SK-N-SH (cell line): ENCODE measurements at regions of chr7 and their contacts with region 1.

Region 1: DNA sequence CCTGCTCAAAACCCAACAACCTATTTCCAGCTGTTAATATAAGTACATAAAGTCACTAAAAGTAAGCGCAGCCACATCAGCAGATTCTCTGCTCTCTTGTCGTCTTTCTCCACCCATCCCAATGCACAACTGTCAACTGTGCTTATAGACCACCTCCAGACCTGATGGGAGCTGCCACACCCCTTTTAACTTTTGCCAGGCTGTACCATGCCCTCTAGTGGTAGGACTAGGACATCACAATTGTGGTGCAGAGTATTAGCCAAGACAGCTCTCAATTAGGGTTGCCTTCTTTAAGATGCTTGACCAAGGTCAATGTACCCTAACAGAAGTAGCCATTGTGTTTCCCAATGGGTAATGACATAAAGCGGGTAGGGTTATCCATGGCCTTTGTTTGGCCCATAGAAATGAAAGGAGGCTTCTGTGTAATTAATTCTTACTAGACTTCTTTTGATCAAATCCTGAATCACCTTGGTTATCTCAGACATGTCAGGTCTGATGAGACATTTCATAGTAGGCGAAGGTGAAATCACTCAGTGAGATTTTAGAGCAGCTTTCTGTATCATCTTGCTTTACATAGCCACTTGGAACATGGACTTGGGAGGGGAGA is 68.1 kb downstream of the SCRN1 start:
- DNase-seq: peak; percentile 81
- H3K4me3 ChIP-seq: no peak overlapping the region; a peak in 1 of 4 replicates
- H3K27ac ChIP-seq: no peak overlapping the region
- H3K4me1 ChIP-seq: no peaks in the 10 kb centered on the region; a peak in 1 of 4 replicates
- H3K27me3 ChIP-seq: no peaks in the 10 kb centered on the region
- CTCF ChIP-seq: peak; percentile 99
- EP300 ChIP-seq: no peak
- RAD21 ChIP-seq: peak; percentile 99

Region 2: DNA sequence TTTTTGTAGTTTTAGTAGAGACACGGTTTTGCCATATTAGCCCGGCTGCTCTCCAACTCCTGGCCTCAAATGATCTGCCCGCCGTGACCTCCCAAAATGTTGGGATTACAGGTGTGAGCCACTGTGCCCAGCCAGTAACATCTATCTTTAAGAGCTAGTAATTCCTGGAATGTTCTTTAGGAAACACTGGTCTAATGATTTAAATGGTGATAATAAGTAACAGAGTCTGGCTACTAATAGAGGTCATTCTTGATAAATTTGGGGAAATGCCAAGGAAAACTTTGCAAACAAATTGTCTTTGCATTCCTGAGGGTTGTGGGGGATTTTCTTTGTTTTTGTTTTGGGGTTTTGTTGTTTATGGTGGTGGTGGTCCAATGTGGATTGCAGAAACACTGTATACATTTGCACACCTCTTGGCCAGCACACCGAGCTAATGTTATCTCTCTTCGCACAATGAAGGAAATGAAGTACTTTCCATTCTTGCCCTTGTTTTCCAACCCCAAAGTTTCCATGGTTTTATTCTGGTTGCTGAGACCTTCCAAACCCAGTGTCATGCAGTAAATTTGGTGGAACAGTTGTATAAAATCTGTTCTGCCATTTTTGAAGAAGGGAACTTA is 166.5 kb before region 1 on chr7:
- CTCF ChIA-PET with region 1: interaction called, 47 read pairs
- POLR2A ChIA-PET with region 1: interaction called, 3 read pairs
- DNase-seq: no peak
- H3K4me3 ChIP-seq: no peak overlapping the region
- H3K27ac ChIP-seq: no peak overlapping the region
- H3K4me1 ChIP-seq: no peaks in the 10 kb centered on the region
- H3K27me3 ChIP-seq: no peaks in the 10 kb centered on the region
- CTCF ChIP-seq: no peak
- EP300 ChIP-seq: no peak
- RAD21 ChIP-seq: no peak

Region 3: GRCh38 chr7:29894256-29894655 is 27.3 kb before region 1 on chr7:
- CTCF ChIA-PET with region 1: interaction called, 35 read pairs
- POLR2A ChIA-PET with region 1: no interaction called
- DNase-seq: peak; percentile 74
- H3K4me3 ChIP-seq: no peak overlapping the region
- H3K27ac ChIP-seq: peak overlapping the region in 1 of 2 experiments; percentile 44; a peak in 2 of 4 replicates
- H3K4me1 ChIP-seq: peaks cover 0 to 29% of the 10 kb centered on the region in 2 experiments; a peak in 2 of 4 replicates
- H3K27me3 ChIP-seq: no peaks in the 10 kb centered on the region; the same call in 1 of the 2 replicates
- CTCF ChIP-seq: no peak
- EP300 ChIP-seq: peak in 1 of 2 experiments; percentile 79; a peak in 2 of 4 replicates
- RAD21 ChIP-seq: peak; percentile 13; the same call in 1 of the 2 replicates

Region 4: GRCh38 chr7:29940199-29940598 is 18.7 kb after region 1 on chr7:
- CTCF ChIA-PET with region 1: interaction called, 72 read pairs
- POLR2A ChIA-PET with region 1: no interaction called
- DNase-seq: no peak
- H3K4me3 ChIP-seq: no peak overlapping the region
- H3K27ac ChIP-seq: no peak overlapping the region
- H3K4me1 ChIP-seq: 0 out of 4 replicates have a peak, but pooled peaks cover 0 to 9% of the 10 kb centered on the region in 2 experiments
- H3K27me3 ChIP-seq: no peaks in the 10 kb centered on the region
- CTCF ChIP-seq: no peak
- EP300 ChIP-seq: no peak
- RAD21 ChIP-seq: no peak

Region 5: DNA sequence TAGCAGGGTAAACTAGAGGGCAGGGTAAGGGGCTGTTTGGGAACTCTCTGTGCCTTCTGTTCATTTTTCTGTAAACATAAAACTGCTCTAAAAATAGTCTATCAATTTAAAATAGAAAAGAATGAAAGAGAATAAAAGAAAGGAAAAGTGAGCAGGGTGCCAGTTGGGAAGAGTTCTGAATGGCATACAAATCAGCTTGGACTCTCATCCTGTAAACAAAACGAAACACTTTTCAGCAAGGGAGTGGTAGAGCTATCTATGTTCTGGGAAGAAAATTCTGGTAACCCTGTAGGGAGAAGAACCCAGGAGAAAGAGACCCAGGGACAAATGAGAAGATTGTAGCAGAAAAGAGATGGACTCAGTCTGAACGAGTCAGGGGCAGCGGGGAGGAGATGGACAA is 43.5 kb after region 1 on chr7:
- CTCF ChIA-PET with region 1: interaction called, 23 read pairs
- POLR2A ChIA-PET with region 1: no interaction called
- DNase-seq: no peak
- H3K4me3 ChIP-seq: no peak overlapping the region
- H3K27ac ChIP-seq: no peak overlapping the region; a peak in 1 of 4 replicates
- H3K4me1 ChIP-seq: peaks cover 0 to 4% of the 10 kb centered on the region in 2 experiments; a peak in 1 of 4 replicates
- H3K27me3 ChIP-seq: no peaks in the 10 kb centered on the region
- CTCF ChIP-seq: no peak
- EP300 ChIP-seq: no peak
- RAD21 ChIP-seq: no peak

Region 6: DNA sequence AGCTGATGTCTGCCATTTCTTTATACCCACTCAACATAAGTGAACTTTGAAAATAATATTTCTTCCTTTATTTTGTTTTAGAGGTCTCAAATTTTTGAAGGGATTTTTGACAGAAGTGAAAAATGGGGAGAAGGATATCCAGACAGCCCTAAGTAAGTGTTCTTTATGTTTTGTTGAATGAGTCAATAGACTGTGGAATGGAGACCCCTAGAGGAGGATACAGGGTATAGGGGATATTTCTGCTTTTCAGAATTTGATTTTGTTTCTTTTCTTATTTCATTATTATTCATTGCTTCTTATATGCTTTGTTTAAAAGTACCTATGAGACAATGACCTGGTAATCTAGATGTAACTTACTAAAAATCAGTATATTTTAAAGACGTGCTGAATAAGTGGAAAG is 141.1 kb after region 1 on chr7:
- CTCF ChIA-PET with region 1: interaction called, 72 read pairs
- POLR2A ChIA-PET with region 1: no interaction called
- DNase-seq: peak; percentile 66
- H3K4me3 ChIP-seq: no peak overlapping the region
- H3K27ac ChIP-seq: no peak overlapping the region
- H3K4me1 ChIP-seq: no peaks in the 10 kb centered on the region
- H3K27me3 ChIP-seq: no peaks in the 10 kb centered on the region
- CTCF ChIP-seq: peak; percentile 96
- EP300 ChIP-seq: no peak
- RAD21 ChIP-seq: peak; percentile 86

Region 7: GRCh38 chr7:30389791-30390190 is 468.3 kb after region 1 on chr7:
- CTCF ChIA-PET with region 1: no interaction called
- POLR2A ChIA-PET with region 1: no interaction called
- DNase-seq: no peak
- H3K4me3 ChIP-seq: no peak overlapping the region
- H3K27ac ChIP-seq: no peak overlapping the region
- H3K4me1 ChIP-seq: no peaks in the 10 kb centered on the region
- H3K27me3 ChIP-seq: no peaks in the 10 kb centered on the region
- CTCF ChIP-seq: no peak
- EP300 ChIP-seq: no peak
- RAD21 ChIP-seq: no peak